Aorta (tissue), 5 donors: ENCODE measurements at regions of chr2 and their contacts with region 1.

Region 1: GRCh38 chr2:102070058-102070642 is 72.4 kb upstream of the IL1R1 start:
- DNase-seq: peak; percentile 94
- ATAC-seq: peak; percentile 94
- H3K4me3 ChIP-seq: no peak overlapping the region
- H3K27ac ChIP-seq: peak overlapping the region; percentile 61 to 82
- H3K4me1 ChIP-seq: peaks cover 0 to 3% of the 10 kb centered on the region in 2 donors
- H3K27me3 ChIP-seq: no peaks in the 10 kb centered on the region

Region 2: GRCh38 chr2:102141970-102142828 is 72.0 kb after region 1 on chr2 and contains the start of gene IL1R1:
- intact Hi-C with region 1: loop called in 1 of 2 experiments (anchors 5 kb)
- DNase-seq: peak; percentile 92 to 95
- ATAC-seq: peak; percentile 93
- H3K4me3 ChIP-seq: peak within 1 kb of the TSS; percentile 40 to 72
- H3K27ac ChIP-seq: peak within 1 kb of the TSS; percentile 58 to 82
- H3K4me1 ChIP-seq: no peaks in the 10 kb centered on the region
- H3K27me3 ChIP-seq: no peaks in the 10 kb centered on the region
- total RNA-seq, gene IL1R1: 135 to 155 TPM

Region 3: GRCh38 chr2:102166189-102166845 is 96.2 kb after region 1 on chr2:
- intact Hi-C with region 1: loop called in 1 of 2 experiments (anchors 5 kb)
- DNase-seq: no peak
- ATAC-seq: peak; percentile 82
- H3K4me3 ChIP-seq: no peak overlapping the region
- H3K27ac ChIP-seq: no peak overlapping the region
- H3K4me1 ChIP-seq: peaks cover 0 to 4% of the 10 kb centered on the region in 2 donors
- H3K27me3 ChIP-seq: no peaks in the 10 kb centered on the region